GM10248 (cell line): ENCODE measurements at regions of chr21 and their contacts with region 1.

Region 1: DNA sequence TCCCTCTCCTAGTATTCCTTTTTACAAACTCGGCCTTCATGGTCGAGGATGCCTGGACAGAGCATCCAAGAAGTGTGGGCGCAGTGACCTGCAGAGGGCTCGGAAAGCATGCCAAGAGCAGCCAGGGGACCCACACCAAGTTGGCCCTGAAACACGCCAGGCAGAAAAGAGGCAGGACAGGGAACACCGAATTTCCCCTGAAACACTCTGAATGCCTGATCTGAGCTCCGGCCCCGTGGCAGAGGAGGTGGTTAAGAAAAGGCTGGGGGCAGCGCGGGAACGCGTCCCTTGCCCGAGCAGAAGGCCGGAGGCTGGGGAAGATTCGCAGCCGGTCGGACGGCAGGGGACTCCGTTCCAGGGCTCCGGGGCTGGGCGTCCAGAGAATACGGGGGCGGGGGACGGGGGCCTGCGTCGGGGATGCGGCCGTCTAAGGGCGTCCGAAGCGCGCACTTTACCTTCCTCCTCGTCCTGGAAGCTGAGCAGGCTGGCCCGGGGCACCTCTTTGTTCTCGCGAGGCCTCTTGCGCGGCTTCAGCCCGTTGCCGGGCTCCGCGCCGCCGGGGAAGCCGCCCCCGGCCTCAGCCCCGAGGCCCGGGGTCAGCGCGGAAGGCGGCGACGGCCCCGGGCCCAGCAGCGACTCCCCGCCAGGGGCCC is 558 bp downstream of the PAXBP1 start:
- DNase-seq: peak; percentile 73
- CTCF ChIP-seq: peak; percentile 12

Region 2: GRCh38 chr21:32597205-32597604 is 173.8 kb before region 1 on chr21:
- CTCF ChIA-PET with region 1: no interaction called
- POLR2A ChIA-PET with region 1: no interaction called
- DNase-seq: no peak
- CTCF ChIP-seq: no peak

Region 3: GRCh38 chr21:32612075-32612998 is 158.7 kb before region 1 on chr21 and contains the start of gene CFAP298:
- CTCF ChIA-PET with region 1: interaction called, 3 read pairs
- POLR2A ChIA-PET with region 1: interaction called, 12 read pairs
- DNase-seq: peak; percentile 91
- CTCF ChIP-seq: no peak

Region 4: DNA sequence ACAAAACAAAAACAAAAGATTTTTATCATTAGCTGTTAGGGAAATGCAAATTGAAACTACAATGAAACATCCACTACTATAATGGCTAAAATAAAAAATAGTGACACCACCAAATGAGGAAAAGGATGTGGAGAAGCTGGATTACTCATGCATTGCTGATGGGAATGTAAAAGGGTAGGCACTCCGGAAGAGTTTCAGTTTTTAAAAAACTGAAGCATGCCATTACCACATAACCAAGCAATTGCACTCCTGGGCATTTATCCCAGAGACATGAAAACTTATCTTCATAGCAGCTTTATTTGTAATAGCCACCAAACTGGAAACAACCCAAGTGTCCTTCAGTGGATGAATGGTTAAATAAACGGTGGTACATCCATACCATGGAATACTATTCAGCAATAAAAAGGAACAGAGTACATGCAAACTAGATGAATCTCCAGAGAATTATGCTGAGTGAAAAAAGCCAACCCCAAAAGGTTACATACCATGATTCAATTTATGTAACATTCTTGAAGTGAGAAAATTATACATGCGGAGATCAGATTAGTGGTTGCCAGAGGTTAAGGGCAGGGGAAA is 144.3 kb before region 1 on chr21:
- CTCF ChIA-PET with region 1: no interaction called
- POLR2A ChIA-PET with region 1: no interaction called
- DNase-seq: no peak
- CTCF ChIP-seq: no peak

Region 5: GRCh38 chr21:32727687-32728455 is 43.1 kb before region 1 on chr21 and contains the start of gene SYNJ1:
- CTCF ChIA-PET with region 1: interaction called, 10 read pairs
- POLR2A ChIA-PET with region 1: interaction called, 9 read pairs
- DNase-seq: peak; percentile 98
- CTCF ChIP-seq: no peak